ENCODE measurements at regions of chr10 and their contacts with region 1.

Region 1: DNA sequence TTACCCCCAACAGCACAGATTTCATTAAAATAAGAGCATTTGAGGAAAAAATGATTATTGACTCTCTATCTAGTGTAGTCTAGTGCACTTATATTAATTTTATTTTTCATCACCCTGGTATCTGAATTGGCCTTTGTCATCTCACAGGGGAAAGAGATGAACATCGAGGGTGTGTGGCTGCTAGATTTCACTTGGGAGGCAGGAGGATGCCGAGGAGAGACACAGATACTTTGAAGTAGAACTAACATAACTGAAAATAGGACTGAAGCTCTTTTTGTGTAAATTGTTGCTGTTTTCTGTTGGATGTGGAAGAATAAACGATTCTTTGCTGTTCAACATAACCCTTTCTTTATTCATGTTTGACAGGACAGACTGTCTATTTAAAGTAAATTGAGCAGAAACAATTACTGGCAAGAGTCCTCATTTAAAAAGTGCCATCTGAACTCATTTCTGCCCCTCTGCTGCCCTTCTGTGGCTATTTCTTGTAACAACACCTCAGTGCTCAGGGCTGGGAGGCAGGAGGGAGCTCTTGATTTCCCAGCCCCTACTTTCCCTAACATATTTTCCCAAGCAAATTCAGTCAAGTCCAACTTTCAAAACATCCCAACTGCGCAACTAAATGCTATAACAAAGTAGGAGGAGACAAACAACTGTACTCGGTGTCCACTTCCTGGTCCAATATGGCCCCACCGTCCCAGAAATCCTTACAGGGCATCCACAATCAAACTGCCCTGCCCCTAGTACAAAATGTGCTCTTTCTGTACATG is 15.6 kb downstream of the LYZL1 start:
- DNase-seq: peak; percentile 80
- H3K4me3 ChIP-seq: no peak overlapping the region; a peak in 1 of 4 replicates
- H3K27ac ChIP-seq: peak overlapping the region in 1 of 2 experiments; percentile 66; a peak in 2 of 4 replicates
- H3K4me1 ChIP-seq: peaks cover 0 to 3% of the 10 kb centered on the region in 2 experiments; a peak in 1 of 4 replicates
- H3K27me3 ChIP-seq: no peaks in the 10 kb centered on the region
- CTCF ChIP-seq: peak; percentile 85
- EP300 ChIP-seq: no peak
- RAD21 ChIP-seq: peak; percentile 97

Region 2: DNA sequence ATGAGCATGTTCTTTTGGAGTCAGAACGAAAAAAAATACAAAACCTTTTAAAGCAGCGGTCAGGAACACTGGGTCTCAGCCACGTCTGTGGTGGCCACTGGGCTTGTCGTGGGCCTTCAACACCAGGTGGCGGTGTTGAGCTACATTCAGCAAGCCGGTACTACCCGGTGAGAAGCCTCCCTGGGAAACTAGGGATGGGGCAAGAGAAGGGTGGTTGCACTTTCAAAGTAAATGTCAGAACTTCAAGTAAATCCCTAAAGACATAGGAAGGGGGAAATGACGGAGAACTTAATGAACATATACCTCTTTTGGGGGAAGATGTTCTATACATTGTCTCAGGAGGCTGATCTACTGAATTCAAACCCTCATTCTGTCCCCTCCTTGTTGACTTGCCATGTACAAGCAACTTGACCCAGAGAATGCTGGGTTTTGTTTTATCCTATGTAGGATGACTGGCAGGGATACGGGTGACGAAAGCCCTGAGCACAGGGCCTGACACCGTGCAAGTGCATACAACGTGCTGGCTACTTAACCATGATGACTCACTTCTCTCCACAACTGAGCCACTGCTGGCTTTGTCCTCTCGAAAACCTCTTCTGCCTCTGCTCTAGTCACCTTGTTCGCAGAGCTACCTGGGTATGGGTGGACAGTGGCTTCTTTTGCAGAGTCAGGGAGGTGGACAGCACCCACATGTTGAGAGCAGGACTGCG is 676.1 kb before region 1 on chr10:
- CTCF ChIA-PET with region 1: interaction called, 23 read pairs
- POLR2A ChIA-PET with region 1: no interaction called
- DNase-seq: peak; percentile 79
- H3K4me3 ChIP-seq: no peak overlapping the region
- H3K27ac ChIP-seq: no peak overlapping the region
- H3K4me1 ChIP-seq: no peaks in the 10 kb centered on the region
- H3K27me3 ChIP-seq: no peaks in the 10 kb centered on the region; the same call in 1 of the 2 replicates
- CTCF ChIP-seq: peak; percentile 92
- EP300 ChIP-seq: no peak
- RAD21 ChIP-seq: peak; percentile 88

Region 3: DNA sequence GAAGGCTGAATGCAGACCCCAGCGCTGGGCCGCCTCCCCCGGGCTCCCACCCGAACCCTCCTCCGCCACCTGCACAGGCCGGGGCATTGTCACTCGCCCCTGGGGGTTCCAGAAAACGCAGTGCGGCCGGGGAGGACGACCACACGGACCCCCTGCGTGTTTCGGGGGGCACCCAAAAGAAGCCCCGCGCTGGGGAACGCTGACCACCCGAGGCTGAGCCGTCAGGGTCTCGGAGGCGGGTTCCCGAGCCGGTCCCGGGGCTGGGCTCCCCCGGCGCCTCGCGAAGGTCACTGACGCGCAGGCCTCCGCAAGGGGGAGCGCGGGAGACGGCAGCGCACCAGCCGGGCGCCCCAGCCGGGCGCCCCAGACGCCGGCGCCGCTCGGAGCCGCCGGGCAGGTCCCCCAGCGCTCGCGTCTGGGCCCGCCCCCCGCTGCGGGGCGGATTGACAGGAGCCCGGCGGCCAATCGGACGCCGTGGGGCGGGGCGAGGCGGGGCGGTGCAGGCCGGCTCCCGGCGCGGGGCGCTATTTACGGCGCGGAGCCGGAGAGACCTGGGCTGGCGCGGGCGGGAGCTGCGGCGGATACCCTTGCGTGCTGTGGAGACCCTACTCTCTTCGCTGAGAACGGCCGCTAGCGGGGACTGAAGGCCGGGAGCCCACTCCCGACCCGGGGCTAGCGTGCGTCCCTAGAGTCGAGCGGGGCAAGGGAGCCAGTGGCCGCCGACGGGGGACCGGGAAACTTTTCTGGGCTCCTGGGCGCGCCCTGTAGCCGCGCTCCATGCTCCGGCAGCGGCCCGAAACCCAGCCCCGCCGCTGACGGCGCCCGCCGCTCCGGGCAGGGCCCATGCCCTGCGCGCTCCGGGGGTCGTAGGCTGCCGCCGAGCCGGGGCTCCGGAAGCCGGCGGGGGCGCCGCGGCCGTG is 627.2 kb before region 1 on chr10 and contains the start of gene BAMBI:
- CTCF ChIA-PET with region 1: interaction called, 35 read pairs
- POLR2A ChIA-PET with region 1: no interaction called
- DNase-seq: peak; percentile 95
- H3K4me3 ChIP-seq: peak within 1 kb of the TSS; percentile 82 to 87
- H3K27ac ChIP-seq: peak within 1 kb of the TSS in 1 of 2 experiments; percentile 92; a peak in 2 of 4 replicates
- H3K4me1 ChIP-seq: peaks cover 11 to 21% of the 10 kb centered on the region in 2 experiments; a peak in 3 of 4 replicates
- H3K27me3 ChIP-seq: peaks cover 18% of the 10 kb centered on the region; the same call in 1 of the 2 replicates
- CTCF ChIP-seq: peak; percentile 59
- EP300 ChIP-seq: 0 out of 4 replicates have a peak, but pooled peaks of 1 of the 2 experiments have one; percentile 15
- RAD21 ChIP-seq: peak; percentile 69
- polyA plus RNA-seq, gene BAMBI: 2.8 and 2.9 TPM in 2 replicates

Region 4: DNA sequence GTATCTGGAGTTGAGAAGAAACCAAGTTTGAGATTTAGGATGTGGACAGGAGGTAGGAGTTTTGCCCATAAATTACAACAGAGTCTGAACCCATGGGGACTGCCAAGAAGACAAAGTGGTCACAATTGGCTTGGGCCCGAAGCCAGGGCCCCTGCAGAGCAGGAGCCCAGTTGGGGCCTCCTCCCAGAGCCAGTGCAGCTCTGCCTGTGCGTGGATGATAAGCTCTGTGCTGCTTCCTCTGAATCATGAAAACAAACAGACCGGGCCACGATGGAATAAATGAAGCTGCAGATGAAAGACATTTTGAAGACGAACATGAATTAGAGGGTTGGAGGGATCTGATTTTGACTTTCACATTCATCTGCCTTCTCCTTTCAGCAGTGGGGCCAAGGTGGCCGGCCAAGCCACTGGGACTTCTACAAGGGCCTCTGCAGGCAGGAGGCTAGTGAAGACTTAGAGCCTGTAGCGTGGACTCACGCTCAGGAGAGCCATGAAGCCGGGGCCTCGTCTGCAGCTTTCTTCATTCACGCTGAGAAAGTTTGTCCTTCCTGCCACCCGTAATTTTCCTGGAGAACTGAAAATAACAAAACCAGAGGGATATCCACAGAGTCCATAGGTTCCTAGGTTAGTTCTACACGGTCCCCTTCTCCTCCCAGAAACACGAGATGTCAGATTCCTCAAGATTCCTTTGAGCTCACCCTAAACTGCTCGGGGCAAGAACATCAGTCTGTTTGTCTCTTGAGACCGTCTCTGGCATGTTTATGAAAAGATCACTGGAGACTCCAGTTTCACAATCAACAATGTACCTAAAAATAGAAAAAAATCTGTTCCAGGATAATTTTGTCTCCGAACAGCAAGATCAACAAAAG is 172.3 kb before region 1 on chr10:
- CTCF ChIA-PET with region 1: interaction called, 34 read pairs
- POLR2A ChIA-PET with region 1: no interaction called
- DNase-seq: no peak
- H3K4me3 ChIP-seq: no peak overlapping the region
- H3K27ac ChIP-seq: no peak overlapping the region
- H3K4me1 ChIP-seq: peaks cover 7 to 10% of the 10 kb centered on the region in 2 experiments; a peak in 3 of 4 replicates
- H3K27me3 ChIP-seq: no peaks in the 10 kb centered on the region; the same call in 1 of the 2 replicates
- CTCF ChIP-seq: no peak
- EP300 ChIP-seq: no peak
- RAD21 ChIP-seq: no peak

Region 5: DNA sequence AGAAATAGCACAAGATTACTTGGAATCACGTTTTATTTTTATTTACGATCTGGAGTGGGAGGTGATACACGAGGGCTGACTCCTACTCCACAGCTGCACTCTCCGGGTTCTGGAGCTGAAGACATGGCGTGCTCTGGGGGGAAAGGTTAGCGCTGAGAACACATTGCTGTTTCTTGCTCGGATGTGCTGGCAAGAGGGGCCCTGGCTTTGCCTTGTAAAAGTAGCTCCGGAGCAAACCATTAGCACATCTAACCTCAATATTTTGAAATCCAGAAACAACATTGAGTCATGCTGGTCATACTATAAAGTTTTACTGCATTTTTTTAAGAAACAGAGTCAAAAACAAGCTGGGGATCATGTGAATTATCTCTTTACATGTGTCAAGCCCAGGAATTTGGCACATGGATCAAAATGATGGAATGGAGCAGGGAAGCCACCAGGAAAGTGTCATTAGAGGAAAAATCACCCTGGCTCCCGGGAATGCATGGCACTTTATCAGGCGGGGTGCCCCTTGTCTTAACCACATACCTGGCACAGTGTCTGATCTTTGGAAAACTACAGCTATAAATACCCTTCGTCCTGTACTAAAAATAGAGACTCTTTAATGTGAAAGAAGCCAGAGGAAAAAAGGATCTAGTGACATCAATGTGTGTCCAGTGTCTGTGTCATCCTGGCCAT is 47.2 kb before region 1 on chr10:
- CTCF ChIA-PET with region 1: interaction called, 45 read pairs
- POLR2A ChIA-PET with region 1: no interaction called
- DNase-seq: no peak
- H3K4me3 ChIP-seq: no peak overlapping the region
- H3K27ac ChIP-seq: peak overlapping the region in 1 of 2 experiments; percentile 93; a peak in 2 of 4 replicates
- H3K4me1 ChIP-seq: peaks cover 27 to 46% of the 10 kb centered on the region in 2 experiments
- H3K27me3 ChIP-seq: peaks cover 5% of the 10 kb centered on the region; the same call in 1 of the 2 replicates
- CTCF ChIP-seq: no peak
- EP300 ChIP-seq: no peak
- RAD21 ChIP-seq: no peak

Measured in SK-N-SH (cell line).